K562 (cell line): ENCODE measurements at regions of chr17 and their contacts with region 1.

Region 1: DNA sequence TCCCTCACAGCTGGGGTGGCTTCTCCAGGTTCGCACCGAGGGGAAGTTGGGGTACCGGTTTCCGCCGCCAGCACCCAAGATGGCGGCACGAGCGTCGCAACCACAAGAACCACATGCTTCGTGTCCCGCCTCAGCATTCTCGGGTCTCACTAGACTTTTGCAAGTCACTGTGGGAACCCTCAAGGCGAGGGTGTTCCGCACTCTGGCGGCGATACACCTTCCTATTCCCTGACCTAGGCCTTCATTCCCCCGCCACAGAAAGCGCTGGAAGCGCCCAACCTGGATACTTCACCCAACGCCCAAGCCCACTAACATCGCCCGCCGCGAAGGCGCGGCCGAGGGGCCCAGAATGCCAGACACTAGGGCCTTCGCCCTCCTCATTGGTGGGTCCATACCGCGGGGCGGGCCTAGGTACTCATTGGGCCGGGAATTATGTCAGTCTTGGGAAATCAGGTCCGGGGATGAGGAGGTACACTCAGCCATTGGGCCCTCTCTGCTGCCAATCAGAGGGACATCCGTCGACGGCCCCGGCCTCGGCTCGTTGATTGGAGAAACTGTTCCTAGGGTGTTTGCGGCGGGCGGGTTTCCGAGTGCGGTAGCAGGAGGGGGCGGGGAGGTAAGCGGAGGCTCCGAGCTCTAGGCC is at the start of gene NFE2L1:
- DNase-seq: peak; percentile 94 to 99 (median 97)
- ATAC-seq: peak; percentile 93
- H3K4me3 ChIP-seq: peak within 1 kb of the TSS; percentile 85
- H3K27ac ChIP-seq: peak within 1 kb of the TSS; percentile 97
- H3K4me1 ChIP-seq: peaks cover 34 to 42% of the 10 kb centered on the region in 2 experiments
- H3K27me3 ChIP-seq: no peaks in the 10 kb centered on the region
- CTCF ChIP-seq: peak in 1 of 3 experiments; percentile 5; a peak in 1 of 6 replicates
- EP300 ChIP-seq: no peak
- POLR2A ChIP-seq: peak; percentile 95
- RAD21 ChIP-seq: no peak
- polyA plus RNA-seq, gene NFE2L1: 2.0 to 2.8 TPM

Region 2: GRCh38 chr17:48030531-48030930 is 17.3 kb before region 1 on chr17:
- CTCF ChIA-PET with region 1: no interaction called
- POLR2A ChIA-PET with region 1: interaction called, 53 read pairs
- in situ Hi-C with region 1: no loop called
- intact Hi-C with region 1: loop called (anchors 2 kb)
- DNase-seq: no peak
- ATAC-seq: no peak
- H3K4me3 ChIP-seq: no peak overlapping the region
- H3K27ac ChIP-seq: no peak overlapping the region
- H3K4me1 ChIP-seq: peaks cover 20 to 21% of the 10 kb centered on the region in 2 experiments; a peak in 4 of 5 replicates
- H3K27me3 ChIP-seq: no peaks in the 10 kb centered on the region
- CTCF ChIP-seq: no peak
- EP300 ChIP-seq: no peak
- POLR2A ChIP-seq: no peak
- RAD21 ChIP-seq: no peak

Region 3: DNA sequence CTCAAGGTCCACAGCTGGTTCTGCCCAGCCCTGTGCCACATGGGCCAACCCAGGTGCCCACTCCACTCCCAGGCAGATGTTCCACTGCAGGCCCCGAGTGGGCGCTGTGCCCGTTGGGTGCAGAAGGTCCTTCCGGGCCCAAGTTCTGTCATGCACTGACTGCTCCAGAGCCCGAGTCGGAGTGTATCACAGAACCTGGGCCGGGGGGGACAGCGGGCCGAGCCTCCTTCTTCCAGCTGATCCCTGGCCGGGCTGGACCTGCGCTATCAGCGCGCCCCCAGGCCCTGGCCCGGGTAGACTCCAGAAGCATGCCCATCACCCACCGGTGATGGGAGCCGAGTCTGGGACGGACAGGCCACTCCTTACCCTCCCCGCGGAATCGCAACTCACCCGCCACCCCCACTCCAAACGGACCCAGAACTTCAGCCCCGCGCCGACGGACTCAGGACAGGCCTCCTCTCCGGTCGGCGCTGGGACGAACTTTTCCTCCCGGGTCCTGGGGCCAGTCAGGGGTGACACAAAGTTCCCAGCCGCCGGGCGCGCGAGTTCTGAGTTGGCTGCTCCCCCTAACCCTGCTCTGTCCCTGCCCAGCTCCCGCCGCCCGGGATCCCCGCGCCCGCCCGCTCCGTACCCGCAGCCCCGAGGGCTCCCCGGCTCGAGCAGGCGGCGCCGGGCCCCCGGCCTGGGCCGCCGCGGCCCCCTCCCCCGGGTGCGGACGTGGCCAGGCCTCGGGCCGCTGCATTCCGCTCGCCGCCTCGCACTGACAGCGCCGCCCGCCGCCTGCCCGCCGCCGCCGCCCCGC is 10.6 kb before region 1 on chr17 and contains the start of gene COPZ2:
- CTCF ChIA-PET with region 1: no interaction called
- POLR2A ChIA-PET with region 1: interaction called, 53 read pairs
- in situ Hi-C with region 1: no loop called
- intact Hi-C with region 1: no loop called
- DNase-seq: no peak
- ATAC-seq: no peak
- H3K4me3 ChIP-seq: no peak within 1 kb of the TSS
- H3K27ac ChIP-seq: no peak within 1 kb of the TSS
- H3K4me1 ChIP-seq: peaks cover 7 to 11% of the 10 kb centered on the region in 2 experiments; a peak in 4 of 5 replicates
- H3K27me3 ChIP-seq: no peaks in the 10 kb centered on the region
- CTCF ChIP-seq: no peak
- EP300 ChIP-seq: no peak
- POLR2A ChIP-seq: no peak
- RAD21 ChIP-seq: no peak
- polyA plus RNA-seq, gene COPZ2: not detected

Region 4: GRCh38 chr17:48062273-48062672 is 14.4 kb after region 1 on chr17:
- CTCF ChIA-PET with region 1: no interaction called
- POLR2A ChIA-PET with region 1: interaction called, 74 read pairs
- in situ Hi-C with region 1: no loop called
- intact Hi-C with region 1: no loop called
- DNase-seq: no peak
- ATAC-seq: no peak
- H3K4me3 ChIP-seq: no peak overlapping the region
- H3K27ac ChIP-seq: no peak overlapping the region
- H3K4me1 ChIP-seq: peaks cover 5 to 7% of the 10 kb centered on the region in 2 experiments; a peak in 3 of 5 replicates
- H3K27me3 ChIP-seq: no peaks in the 10 kb centered on the region
- CTCF ChIP-seq: no peak
- EP300 ChIP-seq: no peak
- POLR2A ChIP-seq: no peak
- RAD21 ChIP-seq: no peak

Region 5: DNA sequence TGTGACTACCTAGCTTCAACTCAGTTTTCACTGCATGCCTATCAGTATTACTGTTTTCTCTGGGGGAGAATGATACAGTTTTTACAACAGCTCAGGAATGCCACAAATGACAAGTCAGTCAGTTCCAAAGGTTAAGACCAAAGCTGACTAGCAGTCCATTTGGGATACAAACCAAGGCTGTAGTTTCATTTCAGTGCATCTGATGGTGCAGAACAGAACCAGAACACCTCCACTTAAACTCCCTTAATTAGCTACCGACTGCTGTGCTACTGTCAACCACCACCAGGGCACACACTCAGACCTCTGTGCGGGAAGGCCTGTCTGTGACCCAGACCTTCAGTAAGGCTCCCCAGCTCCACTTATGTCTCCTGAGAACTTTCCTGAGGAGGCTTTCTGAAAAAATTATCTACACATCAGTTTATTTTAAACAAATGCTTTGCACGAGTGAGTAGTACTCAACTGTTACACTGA is 20.7 kb after region 1 on chr17:
- CTCF ChIA-PET with region 1: no interaction called
- POLR2A ChIA-PET with region 1: interaction called, 11 read pairs
- in situ Hi-C with region 1: no loop called
- intact Hi-C with region 1: no loop called
- DNase-seq: peak in 3 of 4 experiments; percentile 30 to 50 (median 34)
- ATAC-seq: peak; percentile 86
- H3K4me3 ChIP-seq: no peak overlapping the region
- H3K27ac ChIP-seq: no peak overlapping the region
- H3K4me1 ChIP-seq: peaks cover 0 to 3% of the 10 kb centered on the region in 2 experiments; a peak in 1 of 5 replicates
- H3K27me3 ChIP-seq: no peaks in the 10 kb centered on the region
- CTCF ChIP-seq: peak in 2 of 3 experiments; percentile 49 to 51; a peak in 3 of 6 replicates
- EP300 ChIP-seq: no peak
- POLR2A ChIP-seq: no peak
- RAD21 ChIP-seq: 0 out of 4 replicates have a peak, but pooled peaks of 1 of the 2 experiments have one; percentile 22